ENCODE measurements at regions of chr5 and their contacts with region 1.

Region 1: GRCh38 chr5:116068028-116068632 is 16.7 kb upstream of the COMMD10 start:
- DNase-seq: peak in 6 of 9 donors; percentile 31 to 51 (median 38)
- ATAC-seq: peak; percentile 46
- H3K4me3 ChIP-seq: no peak overlapping the region
- H3K4me3 Mint-ChIP-seq: no peak overlapping the region
- H3K27ac ChIP-seq: no peak overlapping the region
- H3K27ac Mint-ChIP-seq: no peak overlapping the region
- H3K4me1 ChIP-seq: no peaks in the 10 kb centered on the region
- H3K4me1 Mint-ChIP-seq: no peaks in the 10 kb centered on the region
- H3K27me3 ChIP-seq: no peaks in the 10 kb centered on the region
- H3K27me3 Mint-ChIP-seq: peaks cover 15 to 50% (median 40%) of the 10 kb centered on the region in 5 donors

Region 2: DNA sequence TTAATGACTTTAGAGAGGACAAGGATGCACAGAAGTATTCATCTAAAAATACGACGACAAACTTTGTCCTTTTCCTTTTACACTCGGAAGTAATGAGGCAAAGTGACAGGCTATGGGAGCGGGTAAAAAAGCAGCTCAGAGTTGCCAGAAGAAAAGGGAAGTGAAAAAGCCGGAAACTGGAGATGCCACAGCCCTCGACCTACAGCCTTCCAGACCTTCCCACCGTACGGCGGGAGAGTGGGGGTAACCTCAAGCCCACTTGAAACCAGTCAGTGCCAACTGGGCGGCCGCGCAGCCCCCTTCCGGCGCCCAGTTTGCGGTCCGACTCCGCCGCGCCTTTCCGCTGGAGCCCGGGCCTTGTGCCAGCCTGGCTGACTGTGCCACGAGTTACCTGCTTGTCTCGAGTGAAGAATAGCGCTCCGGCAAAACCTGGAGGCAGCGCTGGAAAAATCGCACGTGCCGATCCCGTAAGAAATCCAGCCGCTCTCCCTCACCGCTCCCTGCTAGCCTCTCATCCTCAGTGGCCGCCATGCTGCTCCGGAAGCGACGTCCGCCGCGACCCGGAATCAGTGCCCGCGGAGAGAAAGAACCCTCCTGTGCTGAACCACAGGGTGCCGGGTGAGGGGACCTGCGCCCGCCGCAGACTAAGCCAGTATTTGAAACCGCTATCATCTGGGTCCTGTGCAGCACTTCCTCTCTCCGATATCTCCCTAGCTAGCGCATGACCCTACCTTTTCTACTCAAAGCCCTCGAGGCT is 805.6 kb before region 1 on chr5 and contains the start of gene PGGT1B:
- CTCF ChIA-PET with region 1: no interaction called
- POLR2A ChIA-PET with region 1: no interaction called
- intact Hi-C with region 1: no loop called
- DNase-seq: peak; percentile 45 to 69 (median 64)
- ATAC-seq: peak; percentile 94
- H3K4me3 ChIP-seq: peak within 1 kb of the TSS; percentile 94
- H3K4me3 Mint-ChIP-seq: peak within 1 kb of the TSS; percentile 91 to 100 (median 96)
- H3K27ac ChIP-seq: peak within 1 kb of the TSS; percentile 76
- H3K27ac Mint-ChIP-seq: peak within 1 kb of the TSS; percentile 83 to 96 (median 94)
- H3K4me1 ChIP-seq: peaks cover 15 to 23% of the 10 kb centered on the region in 2 donors
- H3K4me1 Mint-ChIP-seq: peaks cover 33 to 59% (median 43%) of the 10 kb centered on the region in 7 donors
- H3K27me3 ChIP-seq: no peaks in the 10 kb centered on the region
- H3K27me3 Mint-ChIP-seq: peaks cover 0 to 4% (median 0%) of the 10 kb centered on the region in 5 donors
- total RNA-seq, gene PGGT1B: 34.5 to 49.1 (median 41.5) TPM

Region 3: GRCh38 chr5:115309751-115310370 is 758.3 kb before region 1 on chr5:
- CTCF ChIA-PET with region 1: interaction called, 3 read pairs
- POLR2A ChIA-PET with region 1: no interaction called
- intact Hi-C with region 1: loop called (anchors 1 kb)
- DNase-seq: peak in 6 of 9 donors; percentile 10 to 56 (median 46)
- ATAC-seq: peak; percentile 76
- H3K4me3 ChIP-seq: no peak overlapping the region
- H3K4me3 Mint-ChIP-seq: no peak overlapping the region
- H3K27ac ChIP-seq: no peak overlapping the region
- H3K27ac Mint-ChIP-seq: no peak overlapping the region
- H3K4me1 ChIP-seq: no peaks in the 10 kb centered on the region
- H3K4me1 Mint-ChIP-seq: no peaks in the 10 kb centered on the region
- H3K27me3 ChIP-seq: no peaks in the 10 kb centered on the region
- H3K27me3 Mint-ChIP-seq: peaks cover 19 to 47% (median 27%) of the 10 kb centered on the region in 5 donors

Region 4: DNA sequence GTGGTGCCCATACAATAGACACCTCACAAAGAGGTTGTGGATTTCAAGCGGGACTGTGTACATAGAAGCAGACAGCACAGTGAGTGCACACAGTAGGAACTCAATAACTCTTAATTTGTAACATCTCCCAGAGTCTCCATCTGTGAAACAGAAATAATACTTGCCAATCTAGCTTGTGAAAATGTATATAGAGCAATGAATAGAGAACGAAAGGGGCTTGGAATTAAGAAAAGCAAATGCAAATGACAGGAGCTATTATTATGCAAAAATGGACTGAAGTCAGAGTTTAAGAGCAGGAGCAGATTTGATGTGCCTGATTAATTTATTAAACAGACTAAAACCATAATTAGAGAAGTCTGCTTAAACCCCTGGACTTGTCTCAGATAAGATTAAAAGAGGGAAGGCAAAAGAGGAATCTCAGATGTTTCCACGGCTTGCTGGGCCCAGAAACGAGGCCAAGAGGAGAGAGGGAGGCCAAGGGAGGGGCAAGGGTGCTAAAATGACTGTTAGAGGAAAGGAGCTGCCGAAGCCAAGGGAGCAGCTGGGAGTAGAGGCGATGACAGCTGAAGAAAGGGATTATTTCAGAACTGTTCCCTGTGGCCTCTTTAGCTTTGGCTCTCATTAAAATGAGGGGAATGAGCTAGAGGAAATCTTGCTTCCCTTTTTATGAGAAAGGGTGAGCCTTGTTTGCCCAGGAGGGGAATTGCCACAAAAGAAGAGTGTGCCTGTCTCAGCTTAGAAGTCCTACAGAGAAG is 595.7 kb before region 1 on chr5:
- CTCF ChIA-PET with region 1: no interaction called
- POLR2A ChIA-PET with region 1: no interaction called
- intact Hi-C with region 1: no loop called
- DNase-seq: no peak
- ATAC-seq: peak; percentile 18
- H3K4me3 ChIP-seq: no peak overlapping the region
- H3K4me3 Mint-ChIP-seq: no peak overlapping the region
- H3K27ac ChIP-seq: no peak overlapping the region
- H3K27ac Mint-ChIP-seq: no peak overlapping the region
- H3K4me1 ChIP-seq: no peaks in the 10 kb centered on the region
- H3K4me1 Mint-ChIP-seq: peaks cover 0 to 5% (median 0%) of the 10 kb centered on the region in 7 donors
- H3K27me3 ChIP-seq: no peaks in the 10 kb centered on the region
- H3K27me3 Mint-ChIP-seq: peaks cover 11 to 22% (median 19%) of the 10 kb centered on the region in 5 donors

Region 5: GRCh38 chr5:115634343-115635132 is 433.6 kb before region 1 on chr5:
- CTCF ChIA-PET with region 1: interaction called, 19 read pairs
- POLR2A ChIA-PET with region 1: no interaction called
- intact Hi-C with region 1: loop called (anchors 1 kb)
- DNase-seq: peak; percentile 59 to 75 (median 67)
- ATAC-seq: peak; percentile 97
- H3K4me3 ChIP-seq: peak overlapping the region; percentile 18
- H3K4me3 Mint-ChIP-seq: peak overlapping the region; percentile 59 to 87 (median 80)
- H3K27ac ChIP-seq: no peak overlapping the region
- H3K27ac Mint-ChIP-seq: peak overlapping the region in 6 of 9 donors; percentile 6 to 67 (median 43)
- H3K4me1 ChIP-seq: no peaks in the 10 kb centered on the region
- H3K4me1 Mint-ChIP-seq: peaks cover 0 to 44% (median 7%) of the 10 kb centered on the region in 7 donors
- H3K27me3 ChIP-seq: no peaks in the 10 kb centered on the region
- H3K27me3 Mint-ChIP-seq: peaks cover 0 to 66% (median 0%) of the 10 kb centered on the region in 5 donors

Region 6: GRCh38 chr5:115888027-115888426 is 180.1 kb before region 1 on chr5:
- CTCF ChIA-PET with region 1: no interaction called
- POLR2A ChIA-PET with region 1: no interaction called
- intact Hi-C with region 1: loop called in 1 of 2 experiments (anchors 5 kb)
- DNase-seq: no peak
- ATAC-seq: no peak
- H3K4me3 ChIP-seq: no peak overlapping the region
- H3K4me3 Mint-ChIP-seq: no peak overlapping the region
- H3K27ac ChIP-seq: no peak overlapping the region
- H3K27ac Mint-ChIP-seq: no peak overlapping the region
- H3K4me1 ChIP-seq: no peaks in the 10 kb centered on the region
- H3K4me1 Mint-ChIP-seq: peaks cover 0 to 10% (median 0%) of the 10 kb centered on the region in 7 donors
- H3K27me3 ChIP-seq: no peaks in the 10 kb centered on the region
- H3K27me3 Mint-ChIP-seq: no peaks in the 10 kb centered on the region

Region 7: GRCh38 chr5:116084871-116085715 is 17.0 kb after region 1 on chr5 and contains the start of gene COMMD10:
- CTCF ChIA-PET with region 1: no interaction called
- POLR2A ChIA-PET with region 1: no interaction called
- intact Hi-C with region 1: loop called (anchors 1 kb)
- DNase-seq: peak; percentile 65 to 88 (median 83)
- ATAC-seq: peak; percentile 95
- H3K4me3 ChIP-seq: peak within 1 kb of the TSS; percentile 54
- H3K4me3 Mint-ChIP-seq: peak within 1 kb of the TSS; percentile 87 to 98 (median 95)
- H3K27ac ChIP-seq: peak within 1 kb of the TSS; percentile 94
- H3K27ac Mint-ChIP-seq: peak within 1 kb of the TSS; percentile 90 to 99 (median 98)
- H3K4me1 ChIP-seq: peaks cover 13 to 16% of the 10 kb centered on the region in 2 donors
- H3K4me1 Mint-ChIP-seq: peaks cover 22 to 77% (median 66%) of the 10 kb centered on the region in 7 donors
- H3K27me3 ChIP-seq: no peaks in the 10 kb centered on the region
- H3K27me3 Mint-ChIP-seq: peaks cover 0 to 3% (median 0%) of the 10 kb centered on the region in 5 donors
- total RNA-seq, gene COMMD10: 29.4 to 50.6 (median 37.8) TPM

Region 8: DNA sequence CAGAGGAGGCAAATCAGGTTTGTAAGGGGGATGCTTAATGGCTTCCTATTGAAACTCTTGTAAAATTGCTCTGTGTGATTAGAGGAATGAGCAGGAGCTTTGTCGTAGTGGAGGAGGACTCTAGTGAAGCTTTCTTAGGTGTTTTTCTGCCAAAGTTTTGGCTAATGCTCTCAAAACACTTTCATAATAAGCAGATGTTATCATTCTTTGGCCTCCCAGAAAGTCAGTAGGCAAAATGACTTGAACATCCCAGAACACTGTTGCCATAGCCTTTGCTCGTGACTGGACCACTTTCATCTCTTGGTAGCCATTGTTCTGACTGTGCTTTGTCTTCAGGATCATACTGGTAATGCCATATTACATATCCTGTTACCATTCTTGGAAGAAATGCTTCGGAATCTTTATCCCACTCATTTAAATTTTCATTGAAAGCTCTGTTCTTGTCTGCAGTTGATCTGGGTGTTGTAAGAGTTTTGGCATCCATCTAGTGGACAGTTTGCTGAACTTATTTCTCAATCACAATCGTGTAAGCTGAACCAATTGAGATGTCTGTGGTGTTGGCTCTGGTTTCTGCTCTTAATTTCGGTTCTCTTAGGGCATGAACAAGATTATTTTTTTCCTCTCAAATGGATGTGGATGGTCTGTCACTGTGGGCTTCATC is 204.3 kb after region 1 on chr5:
- CTCF ChIA-PET with region 1: no interaction called
- POLR2A ChIA-PET with region 1: no interaction called
- intact Hi-C with region 1: no loop called
- DNase-seq: no peak
- ATAC-seq: no peak
- H3K4me3 ChIP-seq: no peak overlapping the region
- H3K4me3 Mint-ChIP-seq: no peak overlapping the region
- H3K27ac ChIP-seq: no peak overlapping the region
- H3K27ac Mint-ChIP-seq: no peak overlapping the region
- H3K4me1 ChIP-seq: no peaks in the 10 kb centered on the region
- H3K4me1 Mint-ChIP-seq: no peaks in the 10 kb centered on the region
- H3K27me3 ChIP-seq: no peaks in the 10 kb centered on the region
- H3K27me3 Mint-ChIP-seq: no peaks in the 10 kb centered on the region

Region 9: GRCh38 chr5:117220730-117221129 is 1152.6 kb after region 1 on chr5:
- CTCF ChIA-PET with region 1: no interaction called
- POLR2A ChIA-PET with region 1: no interaction called
- intact Hi-C with region 1: no loop called
- DNase-seq: no peak
- ATAC-seq: no peak
- H3K4me3 ChIP-seq: no peak overlapping the region
- H3K4me3 Mint-ChIP-seq: no peak overlapping the region
- H3K27ac ChIP-seq: no peak overlapping the region
- H3K27ac Mint-ChIP-seq: no peak overlapping the region
- H3K4me1 ChIP-seq: no peaks in the 10 kb centered on the region
- H3K4me1 Mint-ChIP-seq: no peaks in the 10 kb centered on the region
- H3K27me3 ChIP-seq: no peaks in the 10 kb centered on the region
- H3K27me3 Mint-ChIP-seq: no peaks in the 10 kb centered on the region

Measured in naive thymus-derived CD4-positive, alpha-beta T cell (primary cell).